Activated CD8-positive, alpha-beta T cell treated with anti-CD3 and anti-CD28 coated beads, Interleukin-2, amount 10 ng/mL, durations not matched to agents 7 days and 5 days (primary cell): ENCODE measurements at regions of chr4 and their contacts with region 1.

Region 1: DNA sequence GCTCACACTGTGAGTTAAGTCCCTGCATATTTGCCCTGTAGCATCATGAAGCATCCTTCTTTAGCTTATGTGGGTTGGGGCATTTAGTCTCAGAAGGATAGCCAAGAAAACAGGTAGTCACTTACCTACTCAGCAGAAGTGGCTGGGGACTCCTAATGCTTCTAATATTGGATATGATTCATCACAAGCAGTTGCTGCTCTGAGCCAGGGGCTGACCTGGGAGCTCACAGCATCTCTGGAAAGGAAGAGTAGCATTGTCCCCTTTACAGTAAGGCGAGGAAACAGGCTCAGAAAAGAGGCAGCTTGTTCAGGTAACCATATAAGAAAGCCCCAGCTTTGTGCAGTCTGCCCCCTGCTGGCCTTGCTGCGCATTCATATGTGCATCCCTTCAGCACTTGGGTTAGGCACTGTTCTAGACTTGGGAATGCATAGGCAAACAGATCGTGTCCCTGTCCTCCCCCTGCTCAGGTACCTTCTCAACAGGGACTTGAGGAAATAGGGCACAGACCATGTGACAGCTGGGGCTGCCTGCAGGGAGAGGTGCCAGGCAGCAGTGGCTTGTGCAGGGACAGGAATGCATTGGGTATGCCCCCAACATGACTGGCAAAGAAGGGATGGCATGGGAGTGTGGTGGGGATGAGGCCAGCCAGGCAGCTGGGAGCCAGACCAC is 35.7 kb upstream of the TBC1D14 start:
- DNase-seq: peak; percentile 85
- ATAC-seq: peak; percentile 85
- H3K4me3 Mint-ChIP-seq: no peak overlapping the region
- H3K27ac Mint-ChIP-seq: no peak overlapping the region
- H3K4me1 Mint-ChIP-seq: peaks cover 12% of the 10 kb centered on the region
- H3K27me3 Mint-ChIP-seq: no peaks in the 10 kb centered on the region

Region 2: GRCh38 chr4:6437826-6438238 is 436.1 kb before region 1 on chr4:
- CTCF ChIA-PET with region 1: no interaction called
- POLR2A ChIA-PET with region 1: no interaction called
- DNase-seq: no peak
- ATAC-seq: no peak
- H3K4me3 Mint-ChIP-seq: no peak overlapping the region
- H3K27ac Mint-ChIP-seq: no peak overlapping the region
- H3K4me1 Mint-ChIP-seq: no peaks in the 10 kb centered on the region
- H3K27me3 Mint-ChIP-seq: no peaks in the 10 kb centered on the region

Region 3: GRCh38 chr4:6688879-6689505 is 184.9 kb before region 1 on chr4:
- CTCF ChIA-PET with region 1: interaction called, 14 read pairs
- POLR2A ChIA-PET with region 1: no interaction called
- DNase-seq: peak; percentile 92
- ATAC-seq: peak; percentile 83
- H3K4me3 Mint-ChIP-seq: peak overlapping the region; percentile 81
- H3K27ac Mint-ChIP-seq: peak overlapping the region; percentile 91
- H3K4me1 Mint-ChIP-seq: peaks cover 85% of the 10 kb centered on the region
- H3K27me3 Mint-ChIP-seq: no peaks in the 10 kb centered on the region

Region 4: GRCh38 chr4:6773616-6774540 is 100.0 kb before region 1 on chr4:
- CTCF ChIA-PET with region 1: interaction called, 29 read pairs
- POLR2A ChIA-PET with region 1: interaction called, 3 read pairs
- DNase-seq: no peak
- ATAC-seq: no peak
- H3K4me3 Mint-ChIP-seq: no peak overlapping the region
- H3K27ac Mint-ChIP-seq: no peak overlapping the region
- H3K4me1 Mint-ChIP-seq: peaks cover 43% of the 10 kb centered on the region
- H3K27me3 Mint-ChIP-seq: no peaks in the 10 kb centered on the region

Region 5: GRCh38 chr4:6824071-6824470 is 49.9 kb before region 1 on chr4:
- CTCF ChIA-PET with region 1: interaction called, 20 read pairs
- POLR2A ChIA-PET with region 1: no interaction called
- DNase-seq: no peak
- ATAC-seq: no peak
- H3K4me3 Mint-ChIP-seq: no peak overlapping the region
- H3K27ac Mint-ChIP-seq: no peak overlapping the region
- H3K4me1 Mint-ChIP-seq: peaks cover 15% of the 10 kb centered on the region
- H3K27me3 Mint-ChIP-seq: no peaks in the 10 kb centered on the region

Region 6: GRCh38 chr4:6885951-6886557 is 12.1 kb after region 1 on chr4:
- CTCF ChIA-PET with region 1: interaction called, 22 read pairs
- POLR2A ChIA-PET with region 1: no interaction called
- DNase-seq: no peak
- ATAC-seq: peak; percentile 50
- H3K4me3 Mint-ChIP-seq: no peak overlapping the region
- H3K27ac Mint-ChIP-seq: no peak overlapping the region
- H3K4me1 Mint-ChIP-seq: peaks cover 4% of the 10 kb centered on the region
- H3K27me3 Mint-ChIP-seq: no peaks in the 10 kb centered on the region

Region 7: DNA sequence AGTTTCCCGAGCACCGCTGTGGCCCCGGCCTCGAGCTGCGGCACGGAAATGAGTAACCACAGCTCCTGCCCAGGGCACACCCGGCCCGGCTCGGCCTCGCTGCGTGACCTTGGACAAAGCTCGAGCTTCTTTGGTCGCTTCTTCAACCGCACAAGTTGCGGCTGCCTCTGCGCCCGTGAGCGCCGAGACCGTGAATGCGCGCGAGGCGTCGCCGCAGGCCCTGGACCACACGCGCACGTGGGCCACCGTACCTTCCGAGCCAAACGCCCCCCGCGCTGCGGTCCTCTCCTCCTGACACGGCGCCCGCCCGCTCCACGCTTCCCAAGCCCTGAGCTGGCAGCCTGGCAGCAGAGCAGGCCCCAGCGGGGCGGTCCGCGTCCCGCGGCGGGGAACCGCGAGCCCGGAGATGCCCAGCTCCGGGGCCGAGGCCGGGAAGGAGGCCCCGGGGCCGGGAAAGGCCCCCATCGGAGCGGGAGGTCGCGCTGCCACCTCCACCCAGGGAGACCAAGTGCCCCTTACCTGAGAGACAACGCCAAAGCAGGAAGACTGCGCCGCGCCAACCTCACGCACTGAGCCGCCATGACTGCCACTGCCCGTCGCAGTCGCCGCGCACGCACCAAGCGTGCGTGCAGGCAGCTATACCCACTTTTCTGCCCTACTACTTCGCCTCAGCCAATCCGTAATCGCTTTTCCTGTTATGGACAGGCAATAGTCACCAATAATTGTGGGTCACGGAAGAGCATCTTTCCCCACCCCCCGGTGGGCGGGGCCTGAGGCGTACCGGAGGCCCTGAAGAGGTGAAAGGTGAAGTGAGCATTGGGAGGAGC is 193.7 kb after region 1 on chr4 and contains the start of gene GRPEL1:
- CTCF ChIA-PET with region 1: interaction called, 12 read pairs
- POLR2A ChIA-PET with region 1: no interaction called
- DNase-seq: peak; percentile 100
- ATAC-seq: peak; percentile 96
- H3K4me3 Mint-ChIP-seq: peak within 1 kb of the TSS; percentile 97
- H3K27ac Mint-ChIP-seq: peak within 1 kb of the TSS; percentile 92
- H3K4me1 Mint-ChIP-seq: peaks cover 39% of the 10 kb centered on the region
- H3K27me3 Mint-ChIP-seq: peaks cover 12% of the 10 kb centered on the region
- total RNA-seq, gene GRPEL1: 43.1 to 49.4 TPM